ENCODE measurements at regions of chr1 and their contacts with region 1.

Region 1: GRCh38 chr1:27341525-27342252 is at the start of gene SYTL1:
- DNase-seq: peak; percentile 52
- ATAC-seq: peak; percentile 84
- H3K4me3 ChIP-seq: peak within 1 kb of the TSS; percentile 65 to 84 (median 79)
- H3K27ac ChIP-seq: peak within 1 kb of the TSS; percentile 54
- H3K4me1 ChIP-seq: peaks cover 20% of the 10 kb centered on the region
- H3K27me3 ChIP-seq: no peaks in the 10 kb centered on the region; a peak in 1 of 5 replicates
- CTCF ChIP-seq: no peak; the same call in 1 of the 2 replicates
- EP300 ChIP-seq: no peak
- POLR2A ChIP-seq: 0 out of 4 replicates have a peak, but pooled peaks of 1 of the 2 experiments have one; percentile 20
- RAD21 ChIP-seq: no peak
- total RNA-seq, gene SYTL1: 9.1 and 17.8 TPM in 2 replicates

Region 2: DNA sequence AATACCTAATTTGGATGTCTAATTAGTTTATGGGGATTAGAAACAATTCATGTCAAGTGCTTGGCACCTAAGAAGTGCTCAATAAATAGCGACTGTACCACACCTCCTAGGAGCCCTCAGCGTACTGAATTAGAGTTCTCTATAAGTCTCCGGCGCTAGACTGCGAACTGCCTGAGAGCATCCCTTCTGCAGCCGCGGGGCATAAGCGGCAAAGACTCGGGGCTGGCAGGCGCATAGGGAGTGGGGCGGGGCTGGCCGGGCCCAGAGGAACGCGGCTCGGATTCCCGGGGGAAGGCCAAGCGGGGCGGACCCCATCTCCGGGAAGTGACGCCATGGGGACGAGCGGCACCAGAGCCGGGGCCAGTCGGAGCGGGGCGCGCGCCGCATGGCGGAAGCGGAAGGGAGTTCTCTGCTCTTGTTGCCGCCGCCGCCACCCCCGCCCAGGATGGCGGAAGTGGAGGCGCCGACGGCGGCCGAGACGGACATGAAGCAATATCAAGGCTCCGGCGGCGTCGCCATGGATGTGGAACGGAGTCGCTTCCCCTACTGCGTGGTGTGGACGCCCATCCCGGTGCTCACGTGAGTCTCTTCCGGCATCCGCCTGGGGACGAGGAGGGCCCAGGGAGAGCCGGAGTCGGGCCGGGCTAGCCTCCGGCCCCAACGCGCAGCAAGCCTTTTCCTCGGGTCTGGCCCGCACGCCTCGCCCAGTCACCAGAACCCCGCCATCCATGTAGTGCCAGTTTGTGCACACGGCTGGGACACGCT is 19.7 kb before region 1 on chr1 and contains the start of gene TMEM222:
- CTCF ChIA-PET with region 1: no interaction called
- POLR2A ChIA-PET with region 1: interaction called, 12 read pairs
- in situ Hi-C with region 1: no loop called
- intact Hi-C with region 1: no loop called
- DNase-seq: peak; percentile 92
- ATAC-seq: peak; percentile 96
- H3K4me3 ChIP-seq: peak within 1 kb of the TSS; percentile 95 to 99 (median 96)
- H3K27ac ChIP-seq: peak within 1 kb of the TSS; percentile 86
- H3K4me1 ChIP-seq: peaks cover 37% of the 10 kb centered on the region
- H3K27me3 ChIP-seq: peaks cover 0 to 12% of the 10 kb centered on the region in 2 experiments; a peak in 1 of 5 replicates
- CTCF ChIP-seq: peak; percentile 40; the same call in 1 of the 2 replicates
- EP300 ChIP-seq: peak in 1 of 2 experiments; percentile 63; a peak in 2 of 4 replicates
- POLR2A ChIP-seq: peak; percentile 77 to 81; a peak in 3 of 4 replicates
- RAD21 ChIP-seq: no peak; the same call in none of the 2 replicates
- total RNA-seq, gene TMEM222: 9.9 and 22.7 TPM in 2 replicates

Region 3: DNA sequence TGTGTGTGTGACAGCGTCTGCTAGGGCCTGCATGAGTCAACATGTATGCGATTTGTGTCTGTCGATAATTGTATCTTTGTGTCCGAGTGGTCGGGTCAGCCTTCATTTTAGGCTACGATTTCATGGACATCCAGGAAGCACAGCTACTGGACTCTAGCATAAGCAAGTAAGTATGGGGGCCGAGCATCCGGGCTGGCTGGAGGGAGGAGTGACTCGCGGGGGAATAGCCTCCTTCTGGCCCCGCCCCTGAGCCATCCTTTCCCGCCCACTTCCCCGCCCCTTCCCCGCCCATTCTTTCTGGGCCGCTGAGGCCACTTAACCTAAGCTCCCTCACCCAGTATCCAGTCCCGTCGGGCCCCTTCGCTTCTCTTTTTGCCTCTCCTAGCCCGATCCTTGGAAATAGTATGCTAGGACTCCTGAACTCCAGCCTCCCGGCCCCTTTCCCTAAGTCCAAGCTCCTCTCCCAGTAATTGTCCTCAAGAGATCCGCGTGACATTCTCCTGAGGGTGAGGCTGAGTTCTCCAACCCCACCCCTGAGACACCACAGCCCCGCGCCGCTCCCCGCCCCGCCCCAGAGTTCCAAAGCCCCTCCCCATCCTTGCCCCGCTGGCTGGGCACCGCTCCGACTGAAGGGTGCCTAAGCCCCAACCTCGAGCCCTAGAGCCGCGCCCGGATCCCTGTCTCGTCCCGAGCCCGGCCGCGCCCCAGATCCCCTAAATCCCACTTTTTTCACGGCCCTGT is 23.9 kb after region 1 on chr1:
- CTCF ChIA-PET with region 1: no interaction called
- POLR2A ChIA-PET with region 1: interaction called, 20 read pairs
- in situ Hi-C with region 1: no loop called
- intact Hi-C with region 1: no loop called
- DNase-seq: peak; percentile 68
- ATAC-seq: peak; percentile 60
- H3K4me3 ChIP-seq: peak overlapping the region; percentile 64 to 84 (median 84)
- H3K27ac ChIP-seq: peak overlapping the region; percentile 33
- H3K4me1 ChIP-seq: peaks cover 27% of the 10 kb centered on the region
- H3K27me3 ChIP-seq: peaks cover 2 to 10% of the 10 kb centered on the region in 2 experiments; a peak in 3 of 5 replicates
- CTCF ChIP-seq: no peak
- EP300 ChIP-seq: peak in 1 of 2 experiments; percentile 82; a peak in 1 of 4 replicates
- POLR2A ChIP-seq: peak; percentile 35 to 47; a peak in 2 of 4 replicates
- RAD21 ChIP-seq: no peak